ENCODE measurements at regions of chr2 and their contacts with region 1.

Region 1: DNA sequence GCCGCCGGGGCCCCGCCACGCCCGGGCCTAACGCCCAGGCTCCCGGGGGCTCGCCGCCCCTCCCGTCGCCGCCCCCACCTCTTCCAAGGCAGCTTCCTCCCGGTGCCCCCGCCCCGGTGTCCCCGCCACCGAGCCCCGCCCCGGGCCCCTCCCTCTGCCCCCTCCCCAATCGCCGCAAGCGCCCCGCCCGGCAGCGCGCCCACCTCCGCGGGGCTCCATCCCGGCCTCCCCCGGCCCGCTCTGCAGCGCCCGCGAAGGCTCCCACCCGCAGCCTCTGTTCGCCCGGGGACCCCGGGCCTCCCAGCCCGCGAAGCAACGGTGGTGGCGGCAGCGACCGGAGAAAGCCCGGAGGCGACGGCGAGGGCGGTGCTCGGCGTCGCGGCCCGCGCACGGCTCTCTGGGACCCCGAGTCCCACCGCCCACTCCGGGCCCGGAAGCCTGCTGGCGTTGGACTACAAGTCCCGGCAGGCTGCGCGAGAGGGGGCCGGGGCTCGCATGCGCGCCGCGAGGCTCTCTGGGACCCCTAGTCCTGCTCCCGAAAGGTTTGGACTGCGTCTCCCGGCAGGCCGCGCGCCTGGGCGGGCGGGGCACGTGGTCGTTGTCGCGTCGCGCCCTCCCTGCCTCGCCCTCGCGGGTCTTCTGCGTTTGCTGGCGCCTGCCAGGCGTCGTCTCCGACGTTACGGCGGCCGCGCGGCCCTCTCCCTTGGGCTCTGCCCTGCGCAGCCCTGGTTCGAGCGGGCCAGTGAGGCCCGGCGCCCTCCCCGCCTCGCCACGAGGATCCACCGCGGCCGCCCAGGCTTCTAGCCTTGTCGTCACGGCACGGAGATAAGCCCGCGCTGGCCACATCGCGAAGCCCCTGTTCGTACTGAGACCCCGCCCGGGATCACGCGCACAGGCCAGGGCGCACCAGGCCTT is at the start of gene STK25:
- DNase-seq: peak; percentile 98
- H3K4me3 ChIP-seq: peak within 1 kb of the TSS; percentile 55 to 84 (median 77)
- H3K27ac ChIP-seq: peak within 1 kb of the TSS; percentile 14
- H3K4me1 ChIP-seq: peaks cover 16% of the 10 kb centered on the region
- H3K27me3 ChIP-seq: no peaks in the 10 kb centered on the region
- CTCF ChIP-seq: no peak
- POLR2A ChIP-seq: peak; percentile 88
- total RNA-seq, gene STK25: 236 and 286 TPM in 2 replicates

Region 2: GRCh38 chr2:241324775-241325174 is 183.7 kb before region 1 on chr2:
- CTCF ChIA-PET with region 1: no interaction called
- POLR2A ChIA-PET with region 1: no interaction called
- dilution Hi-C with region 1: no loop called
- intact Hi-C with region 1: no loop called
- DNase-seq: no peak
- H3K4me3 ChIP-seq: no peak overlapping the region
- H3K27ac ChIP-seq: no peak overlapping the region
- H3K4me1 ChIP-seq: peaks cover 29% of the 10 kb centered on the region
- H3K27me3 ChIP-seq: no peaks in the 10 kb centered on the region
- CTCF ChIP-seq: no peak
- POLR2A ChIP-seq: no peak

Region 3: GRCh38 chr2:241355983-241356870 is 152.3 kb before region 1 on chr2 and contains the start of gene FARP2:
- CTCF ChIA-PET with region 1: interaction called, 3 read pairs
- POLR2A ChIA-PET with region 1: interaction called, 9 read pairs
- dilution Hi-C with region 1: no loop called
- intact Hi-C with region 1: loop called (anchors 5 kb)
- DNase-seq: peak; percentile 99
- H3K4me3 ChIP-seq: peak within 1 kb of the TSS; percentile 48 to 91 (median 62)
- H3K27ac ChIP-seq: peak within 1 kb of the TSS; percentile 33
- H3K4me1 ChIP-seq: peaks cover 21% of the 10 kb centered on the region
- H3K27me3 ChIP-seq: no peaks in the 10 kb centered on the region
- CTCF ChIP-seq: no peak
- POLR2A ChIP-seq: peak; percentile 89
- total RNA-seq, gene FARP2: 40.6 and 45.3 TPM in 2 replicates

Region 4: GRCh38 chr2:241546771-241547498 is 38.4 kb after region 1 on chr2:
- CTCF ChIA-PET with region 1: interaction called, 6 read pairs
- POLR2A ChIA-PET with region 1: no interaction called
- dilution Hi-C with region 1: no loop called
- intact Hi-C with region 1: loop called (anchors 1 kb)
- DNase-seq: peak; percentile 92
- H3K4me3 ChIP-seq: no peak overlapping the region
- H3K27ac ChIP-seq: peak overlapping the region; percentile 61
- H3K4me1 ChIP-seq: peaks cover 33% of the 10 kb centered on the region
- H3K27me3 ChIP-seq: no peaks in the 10 kb centered on the region
- CTCF ChIP-seq: no peak
- POLR2A ChIP-seq: peak; percentile 50

Region 5: DNA sequence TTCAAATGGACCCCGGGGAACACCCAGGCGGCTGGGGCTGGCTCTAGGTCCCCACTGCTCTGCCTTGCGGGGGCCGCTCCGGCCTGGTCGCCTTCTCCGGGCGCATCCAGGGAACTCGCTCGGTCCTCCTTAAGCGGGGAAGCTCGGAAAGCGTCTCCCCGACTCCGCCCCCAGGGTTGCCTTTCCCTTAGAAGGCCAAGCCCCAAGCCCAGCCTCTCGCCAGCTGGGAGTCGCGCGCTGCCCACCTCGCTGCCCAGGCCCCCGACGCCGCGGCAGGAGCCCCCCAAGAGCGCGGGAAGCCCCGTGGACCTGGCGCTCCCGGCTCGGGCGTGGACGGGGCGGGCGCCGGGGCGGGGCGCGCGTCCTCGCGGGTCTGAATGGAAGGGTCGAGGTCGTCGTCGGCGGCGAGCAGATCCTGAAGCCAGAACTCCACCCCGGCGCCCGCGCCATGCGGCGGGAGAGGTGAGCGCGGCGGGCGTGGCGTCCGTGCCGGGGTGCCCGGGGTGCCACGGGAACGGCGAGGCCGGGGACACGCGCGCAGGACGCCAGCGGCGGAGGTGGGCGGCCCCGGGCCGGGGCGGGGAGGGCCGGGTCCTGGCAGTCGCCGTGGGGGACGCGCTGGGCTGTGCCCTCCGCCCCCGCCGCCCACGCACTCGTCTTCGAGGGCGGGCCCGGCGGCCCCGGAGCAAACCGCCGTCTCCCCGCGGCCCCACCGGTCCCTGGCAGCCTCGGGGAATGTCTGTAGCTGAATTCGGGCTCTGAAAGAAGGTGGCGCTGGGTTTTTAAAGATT is 50.2 kb after region 1 on chr2 and contains the start of gene BOK:
- CTCF ChIA-PET with region 1: interaction called, 15 read pairs
- POLR2A ChIA-PET with region 1: no interaction called
- dilution Hi-C with region 1: no loop called
- intact Hi-C with region 1: loop called (anchors 1 kb)
- DNase-seq: peak; percentile 84
- H3K4me3 ChIP-seq: peak within 1 kb of the TSS; percentile 71 to 80 (median 72)
- H3K27ac ChIP-seq: peak within 1 kb of the TSS; percentile 25
- H3K4me1 ChIP-seq: peaks cover 30% of the 10 kb centered on the region
- H3K27me3 ChIP-seq: no peaks in the 10 kb centered on the region
- CTCF ChIP-seq: no peak
- POLR2A ChIP-seq: peak; percentile 68
- total RNA-seq, gene BOK: 52.4 and 76.0 TPM in 2 replicates

Region 6: GRCh38 chr2:241609859-241610793 is 101.6 kb after region 1 on chr2:
- CTCF ChIA-PET with region 1: no interaction called
- POLR2A ChIA-PET with region 1: no interaction called
- dilution Hi-C with region 1: no loop called
- intact Hi-C with region 1: loop called (anchors 1 kb)
- DNase-seq: peak; percentile 83
- H3K4me3 ChIP-seq: peak overlapping the region; percentile 15 to 53 (median 15)
- H3K27ac ChIP-seq: peak overlapping the region; percentile 28
- H3K4me1 ChIP-seq: peaks cover 5% of the 10 kb centered on the region
- H3K27me3 ChIP-seq: no peaks in the 10 kb centered on the region
- CTCF ChIP-seq: peak; percentile 62 to 67
- POLR2A ChIP-seq: peak; percentile 35

Region 7: DNA sequence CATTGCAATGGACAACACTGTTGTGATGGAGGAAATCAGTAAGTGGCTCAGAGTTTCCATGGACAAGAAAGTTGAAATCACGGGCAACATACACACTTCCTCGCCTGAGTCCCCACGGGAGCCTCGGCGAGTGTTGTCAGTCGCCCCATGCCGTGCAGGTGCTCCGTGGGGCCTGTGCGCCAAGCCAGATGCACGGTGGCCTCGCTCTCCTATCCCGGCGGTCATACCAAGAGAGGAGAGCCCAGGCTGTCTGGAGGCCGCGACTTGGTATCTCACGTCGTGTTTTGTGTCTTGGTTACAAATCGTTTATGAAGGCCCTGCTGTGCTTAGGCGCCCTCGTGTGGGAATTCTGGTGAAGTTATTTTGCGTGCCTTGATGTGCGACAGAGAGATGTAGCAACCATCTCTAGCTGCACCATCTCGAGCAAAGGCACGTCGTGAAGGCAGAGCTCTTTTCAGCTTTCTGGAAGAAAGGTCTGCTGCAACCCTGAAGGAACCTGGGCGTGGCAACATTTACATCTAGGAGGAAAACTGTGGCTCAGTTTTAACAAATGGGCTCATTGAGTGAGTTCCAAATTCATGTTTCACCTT is 150.7 kb after region 1 on chr2:
- CTCF ChIA-PET with region 1: interaction called, 6 read pairs
- POLR2A ChIA-PET with region 1: no interaction called
- dilution Hi-C with region 1: no loop called
- intact Hi-C with region 1: loop called (anchors 2 kb)
- DNase-seq: peak; percentile 71
- H3K4me3 ChIP-seq: no peak overlapping the region
- H3K27ac ChIP-seq: no peak overlapping the region
- H3K4me1 ChIP-seq: no peaks in the 10 kb centered on the region
- H3K27me3 ChIP-seq: no peaks in the 10 kb centered on the region
- CTCF ChIP-seq: peak; percentile 60 to 70
- POLR2A ChIP-seq: no peak

Region 8: DNA sequence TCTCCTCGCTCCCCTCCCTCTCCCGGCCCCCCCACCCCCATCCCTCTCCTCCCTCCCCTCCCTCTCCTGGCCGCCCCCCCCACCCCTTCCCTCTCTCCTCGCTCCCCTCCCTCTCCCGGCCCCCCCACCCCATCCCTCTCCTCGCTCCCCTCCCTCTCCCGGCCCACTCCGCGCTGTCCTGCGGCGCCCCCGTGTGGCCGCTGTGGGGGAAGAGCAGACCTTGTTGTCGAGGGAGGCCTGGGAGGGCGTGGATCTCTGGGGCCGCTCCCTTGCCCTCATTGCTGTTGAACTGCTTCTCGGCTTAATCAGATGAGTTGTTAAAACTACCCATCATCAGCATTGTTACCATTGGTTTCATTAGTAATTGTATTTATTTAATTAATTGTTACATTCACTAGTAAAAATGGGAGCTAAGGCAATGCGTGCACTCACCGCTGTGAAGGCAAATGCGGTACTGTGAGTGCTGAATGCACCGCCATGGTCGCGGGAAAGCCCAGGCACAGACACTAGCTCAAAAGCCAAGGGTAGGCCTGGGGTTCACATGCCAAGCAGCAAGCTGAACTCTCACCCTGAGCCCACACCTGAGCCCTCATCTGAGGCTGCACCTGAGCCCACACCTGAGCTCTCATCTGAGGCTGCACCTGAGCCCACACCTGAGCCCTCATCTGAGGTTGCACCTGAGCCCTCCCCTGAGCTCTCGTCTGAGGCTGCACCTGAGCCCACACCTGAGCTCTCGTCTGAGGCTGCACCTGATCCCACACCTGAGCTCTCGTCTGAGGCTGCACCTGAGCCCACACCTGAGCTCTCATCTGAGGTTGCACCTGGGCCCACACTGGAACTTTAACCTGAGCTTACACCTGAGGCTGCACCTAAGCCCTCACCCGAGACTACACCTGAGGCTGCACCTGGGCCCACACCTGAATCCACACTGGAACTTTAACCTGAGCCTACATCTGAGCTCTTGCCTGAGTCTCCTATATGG is 369.8 kb after region 1 on chr2:
- CTCF ChIA-PET with region 1: no interaction called
- POLR2A ChIA-PET with region 1: no interaction called
- dilution Hi-C with region 1: no loop called
- intact Hi-C with region 1: loop called (anchors 10 kb)
- DNase-seq: peak; percentile 49
- H3K4me3 ChIP-seq: no peak overlapping the region
- H3K27ac ChIP-seq: no peak overlapping the region
- H3K4me1 ChIP-seq: peaks cover 3% of the 10 kb centered on the region
- H3K27me3 ChIP-seq: no peaks in the 10 kb centered on the region
- CTCF ChIP-seq: peak; percentile 48 to 86
- POLR2A ChIP-seq: no peak